Colonic mucosa (tissue), 4 donors: ENCODE measurements at regions of chr20 and their contacts with region 1.

Region 1: DNA sequence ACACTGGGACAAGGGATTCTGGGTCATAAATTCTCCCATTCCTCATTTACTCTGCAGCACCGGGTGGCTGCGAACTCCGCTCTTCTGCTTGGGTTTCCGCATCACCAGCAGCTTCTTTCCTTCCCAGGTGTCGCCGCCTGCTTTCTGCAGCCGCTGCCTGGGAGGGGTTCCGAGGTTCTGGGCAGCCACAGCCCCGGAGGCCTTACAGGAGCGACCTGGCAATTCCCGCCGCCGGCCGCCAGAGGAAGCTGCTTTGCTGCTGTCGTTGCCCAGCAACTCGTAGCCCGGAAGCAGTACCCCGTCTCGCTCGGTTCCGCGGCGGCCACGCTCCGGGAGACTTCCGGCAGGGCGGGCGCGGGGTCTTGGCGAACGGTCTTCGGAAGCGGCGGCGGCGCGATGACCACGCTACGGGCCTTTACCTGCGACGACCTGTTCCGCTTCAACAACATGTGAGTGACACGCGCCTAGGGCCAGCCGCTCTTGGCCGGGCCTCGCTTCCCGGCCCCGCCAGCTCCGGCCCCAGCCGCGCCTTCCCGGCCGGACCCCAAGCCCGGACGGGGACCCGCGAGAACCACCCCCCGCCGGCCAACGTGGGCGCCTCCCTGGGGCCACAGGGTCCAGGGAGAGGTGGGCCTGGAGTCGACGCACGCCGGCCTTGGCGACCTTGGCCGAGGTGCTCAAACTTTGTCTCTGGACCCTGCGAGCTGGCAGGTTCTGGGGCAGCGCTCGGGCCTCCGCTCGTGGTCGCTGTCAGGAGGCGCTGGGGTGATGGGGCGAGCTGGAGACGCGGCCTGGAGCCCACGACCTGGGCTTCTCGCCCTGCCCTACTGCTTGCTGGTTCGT is at the start of gene NAA20:
- DNase-seq: peak; percentile 95
- H3K4me3 ChIP-seq: peak within 1 kb of the TSS; percentile 99
- H3K27ac ChIP-seq: peak within 1 kb of the TSS; percentile 48
- H3K4me1 ChIP-seq: peaks cover 9% of the 10 kb centered on the region
- H3K27me3 ChIP-seq: no peaks in the 10 kb centered on the region
- CTCF ChIP-seq: peak; percentile 66
- total RNA-seq, gene NAA20: 43.5 to 45.8 TPM

Region 2: GRCh38 chr20:19392344-19393130 is 624.7 kb before region 1 on chr20:
- intact Hi-C with region 1: no loop called
- DNase-seq: no peak
- H3K4me3 ChIP-seq: no peak overlapping the region
- H3K27ac ChIP-seq: no peak overlapping the region
- H3K4me1 ChIP-seq: no peaks in the 10 kb centered on the region
- H3K27me3 ChIP-seq: no peaks in the 10 kb centered on the region
- CTCF ChIP-seq: no peak

Region 3: GRCh38 chr20:19582782-19583181 is 434.4 kb before region 1 on chr20:
- intact Hi-C with region 1: no loop called
- DNase-seq: no peak
- H3K4me3 ChIP-seq: no peak overlapping the region
- H3K27ac ChIP-seq: no peak overlapping the region
- H3K4me1 ChIP-seq: no peaks in the 10 kb centered on the region
- H3K27me3 ChIP-seq: no peaks in the 10 kb centered on the region
- CTCF ChIP-seq: no peak

Region 4: DNA sequence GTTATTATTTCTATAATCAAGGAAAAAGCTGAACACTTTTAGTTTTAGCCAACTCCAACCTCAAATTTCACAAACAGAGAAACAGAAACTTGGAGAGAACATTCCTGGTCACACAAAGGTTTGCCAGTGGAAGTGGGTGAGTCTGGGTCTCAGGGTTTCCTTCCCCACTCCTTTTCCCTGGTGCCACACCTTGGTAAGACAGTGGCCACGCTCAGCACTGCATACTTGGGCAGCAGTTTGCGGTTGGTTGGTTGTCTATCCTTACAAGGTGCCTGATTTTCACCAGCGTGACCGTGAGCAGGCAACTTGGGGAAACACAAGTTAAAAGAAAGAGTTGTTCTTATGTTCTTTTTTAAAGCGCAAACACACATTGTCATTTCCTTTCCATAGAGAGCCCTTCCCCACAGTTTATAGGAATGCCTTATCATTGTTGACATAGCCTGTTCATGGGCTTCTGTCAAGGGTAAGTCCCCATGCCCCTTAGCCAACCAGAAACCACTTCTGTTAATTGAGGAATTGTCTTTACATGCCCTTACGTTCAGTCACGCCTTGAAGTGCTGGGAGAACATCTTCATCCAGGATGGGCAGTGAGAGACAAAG is 177.0 kb before region 1 on chr20:
- intact Hi-C with region 1: no loop called
- DNase-seq: peak; percentile 45
- H3K4me3 ChIP-seq: no peak overlapping the region
- H3K27ac ChIP-seq: peak overlapping the region; percentile 56
- H3K4me1 ChIP-seq: no peaks in the 10 kb centered on the region
- H3K27me3 ChIP-seq: no peaks in the 10 kb centered on the region
- CTCF ChIP-seq: no peak

Region 5: DNA sequence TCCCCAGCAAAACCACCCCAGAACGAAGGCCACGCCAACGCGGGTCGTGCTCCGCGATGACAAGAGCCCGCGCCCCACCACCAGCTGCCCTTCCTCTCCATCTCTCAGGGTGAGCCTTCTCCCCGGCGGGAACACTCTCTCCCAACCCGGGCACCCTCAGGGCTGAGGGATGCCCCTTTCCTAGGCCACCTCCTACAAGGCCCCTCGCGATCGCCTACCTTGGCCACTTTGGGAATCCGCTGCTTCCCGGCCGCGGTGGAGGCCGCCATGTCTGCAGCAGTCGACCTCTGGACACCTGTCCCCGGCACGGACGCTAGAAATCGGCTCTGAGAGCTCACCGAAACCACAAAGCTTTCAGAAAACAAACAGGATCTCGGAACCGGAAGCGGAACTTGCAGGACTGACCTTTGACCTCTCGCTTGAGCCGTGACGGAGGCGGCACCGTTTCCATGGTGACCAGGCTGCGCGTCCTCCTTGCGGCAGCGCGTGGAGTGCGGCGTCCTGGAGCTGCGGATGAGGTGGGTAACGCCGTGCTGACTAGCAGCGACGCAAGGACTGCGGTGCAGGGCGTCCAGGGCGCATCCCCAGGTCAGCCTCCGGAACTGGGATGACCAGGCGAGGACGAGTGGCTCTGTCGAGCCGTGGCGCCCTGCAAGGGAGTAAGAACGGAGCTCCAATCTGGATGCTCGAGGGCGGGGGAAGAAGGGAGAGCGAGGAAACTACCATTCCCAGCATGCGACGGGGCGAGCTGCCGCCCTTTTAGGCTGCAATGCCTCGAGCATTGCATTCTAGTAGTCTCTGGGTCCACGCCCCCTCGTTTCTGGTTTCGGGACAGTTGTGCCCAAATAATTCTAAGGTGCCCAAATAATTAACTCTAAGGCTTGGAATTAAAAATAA is 35.1 kb after region 1 on chr20 and contains the starts of genes CFAP61 and CRNKL1:
- intact Hi-C with region 1: loop called (anchors 5 kb)
- DNase-seq: peak; percentile 98
- H3K4me3 ChIP-seq: peak within 1 kb of the TSS; percentile 73
- H3K27ac ChIP-seq: peak within 1 kb of the TSS; percentile 91
- H3K4me1 ChIP-seq: no peaks in the 10 kb centered on the region
- H3K27me3 ChIP-seq: no peaks in the 10 kb centered on the region
- CTCF ChIP-seq: no peak
- total RNA-seq, gene CFAP61: 0.32 TPM in 1 of 2 donors, not detected in the other
- total RNA-seq, gene CRNKL1: 21.4 to 25.8 TPM

Region 6: DNA sequence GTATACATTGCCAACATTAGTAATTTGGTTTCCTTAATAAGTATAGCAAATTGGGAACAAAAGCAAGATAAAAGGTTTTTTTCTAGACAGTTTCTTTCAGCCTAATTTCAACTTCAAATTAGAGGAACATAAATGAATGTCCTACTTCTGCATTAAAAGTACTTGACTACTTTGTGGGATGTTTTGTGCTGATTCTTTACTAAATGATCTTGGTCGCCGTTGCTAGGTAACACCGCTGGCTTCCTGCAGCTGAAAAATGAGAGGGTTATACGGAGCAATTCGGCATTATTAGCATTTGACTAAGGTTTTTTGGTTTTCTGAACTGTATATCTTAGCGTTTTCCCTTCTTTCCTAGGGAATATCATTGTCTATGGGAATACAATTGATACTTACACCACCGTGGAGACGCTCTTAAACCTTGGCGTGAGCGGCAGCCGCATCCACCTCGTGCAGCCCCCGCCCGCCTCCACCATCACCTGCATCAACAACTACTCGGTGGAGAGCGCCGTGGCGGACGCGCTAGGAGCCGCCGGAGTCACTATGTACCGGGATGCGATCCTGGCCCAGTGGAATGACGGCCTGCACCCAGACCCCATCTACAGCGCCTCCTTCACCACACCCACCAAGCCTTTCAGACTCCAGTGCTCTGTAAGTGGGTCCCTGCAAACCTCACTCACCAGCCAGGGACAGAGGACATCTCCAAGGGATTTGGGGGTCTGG is 259.7 kb after region 1 on chr20:
- intact Hi-C with region 1: no loop called
- DNase-seq: no peak
- H3K4me3 ChIP-seq: no peak overlapping the region
- H3K27ac ChIP-seq: no peak overlapping the region
- H3K4me1 ChIP-seq: no peaks in the 10 kb centered on the region
- H3K27me3 ChIP-seq: no peaks in the 10 kb centered on the region
- CTCF ChIP-seq: no peak